Activated naive CD4-positive, alpha-beta T cell treated with anti-CD3 and anti-CD28 coated beads for 36 hours (primary cell): ENCODE measurements at regions of chr7 and their contacts with region 1.

Region 1: DNA sequence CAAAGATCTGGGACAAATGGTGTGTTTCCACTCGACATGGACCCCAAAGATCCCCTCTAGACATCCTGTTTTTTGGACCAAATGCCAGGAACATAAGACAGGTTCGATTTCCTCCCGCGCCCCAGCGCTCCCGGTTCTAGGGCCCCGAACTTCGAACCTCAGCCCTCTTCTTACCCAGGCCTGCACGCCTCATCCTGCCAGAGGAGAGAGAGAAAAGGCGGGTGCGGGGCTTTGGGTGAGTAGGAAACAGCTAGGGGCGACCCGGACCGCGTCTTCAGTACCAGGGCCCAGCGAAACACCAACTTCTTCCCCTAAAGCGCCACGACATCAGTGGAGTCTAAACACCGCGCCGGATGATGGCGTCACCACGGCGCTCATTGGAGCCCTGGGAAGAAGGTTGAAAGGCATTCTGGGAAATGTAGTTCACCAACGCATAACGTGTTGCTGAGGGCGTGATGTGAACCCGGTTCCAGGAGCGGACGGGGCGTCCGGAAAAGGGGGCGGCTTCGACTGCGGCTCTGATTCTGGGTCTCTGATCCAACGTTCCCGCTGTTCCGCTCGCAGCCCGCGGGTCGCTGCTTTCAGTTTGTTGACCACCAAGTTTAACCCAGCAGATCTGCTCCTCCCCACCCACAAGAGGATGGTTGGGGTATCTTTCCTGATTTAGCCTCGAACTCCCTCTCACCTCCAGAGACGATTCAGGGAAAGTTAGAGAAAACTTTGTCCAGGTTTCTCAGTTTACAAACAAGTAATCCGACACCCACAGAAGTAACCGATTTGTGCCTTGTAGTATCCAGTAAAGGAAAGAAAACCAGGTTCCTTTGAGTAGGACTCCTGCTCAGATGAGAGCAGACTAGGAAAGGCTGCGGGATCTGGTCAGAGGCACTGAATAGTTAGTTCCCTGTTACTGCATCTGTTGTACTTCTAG is at the start of gene BET1:
- DNase-seq: peak; percentile 94
- H3K4me3 Mint-ChIP-seq: peak within 1 kb of the TSS; percentile 99
- H3K27ac Mint-ChIP-seq: peak within 1 kb of the TSS; percentile 94
- H3K4me1 Mint-ChIP-seq: peaks cover 34% of the 10 kb centered on the region
- H3K27me3 Mint-ChIP-seq: peaks cover 6% of the 10 kb centered on the region
- total RNA-seq, gene BET1: 21.5 to 25.9 TPM

Region 2: DNA sequence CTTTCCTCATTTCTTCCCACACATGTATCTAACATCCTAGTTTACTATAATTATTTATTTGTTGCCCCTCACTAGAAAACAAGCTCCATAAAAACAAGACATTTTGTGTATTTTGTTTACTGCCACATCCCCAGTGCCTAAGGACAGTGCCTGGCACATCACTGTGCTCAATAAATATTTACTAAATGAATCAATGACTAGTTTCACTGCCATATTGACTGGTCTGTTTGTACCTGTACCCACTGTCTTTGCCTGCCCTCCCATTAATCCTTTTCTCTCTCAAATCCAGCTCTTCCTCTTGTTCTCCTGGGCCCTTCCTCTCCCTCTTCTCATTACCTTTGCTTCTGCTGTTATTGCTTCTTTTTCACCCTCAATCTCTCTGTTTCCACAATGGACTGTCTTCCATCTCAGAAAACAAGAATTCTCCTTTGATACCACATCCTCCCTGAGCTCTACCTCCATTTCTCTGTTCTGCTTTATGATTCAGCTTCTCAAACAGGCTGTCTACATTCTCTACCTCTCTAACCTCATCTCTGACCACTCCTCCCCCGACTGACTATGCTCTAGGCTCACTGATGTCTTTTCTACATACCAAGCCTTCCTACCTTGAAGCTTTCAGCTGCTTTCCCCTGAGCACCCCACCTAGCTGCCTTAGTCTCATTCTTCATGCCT is 1405.8 kb before region 1 on chr7:
- CTCF ChIA-PET with region 1: no interaction called
- intact Hi-C with region 1: loop called (anchors 10 kb)
- DNase-seq: no peak
- H3K4me3 Mint-ChIP-seq: no peak overlapping the region
- H3K27ac Mint-ChIP-seq: no peak overlapping the region
- H3K4me1 Mint-ChIP-seq: no peaks in the 10 kb centered on the region
- H3K27me3 Mint-ChIP-seq: no peaks in the 10 kb centered on the region

Region 3: DNA sequence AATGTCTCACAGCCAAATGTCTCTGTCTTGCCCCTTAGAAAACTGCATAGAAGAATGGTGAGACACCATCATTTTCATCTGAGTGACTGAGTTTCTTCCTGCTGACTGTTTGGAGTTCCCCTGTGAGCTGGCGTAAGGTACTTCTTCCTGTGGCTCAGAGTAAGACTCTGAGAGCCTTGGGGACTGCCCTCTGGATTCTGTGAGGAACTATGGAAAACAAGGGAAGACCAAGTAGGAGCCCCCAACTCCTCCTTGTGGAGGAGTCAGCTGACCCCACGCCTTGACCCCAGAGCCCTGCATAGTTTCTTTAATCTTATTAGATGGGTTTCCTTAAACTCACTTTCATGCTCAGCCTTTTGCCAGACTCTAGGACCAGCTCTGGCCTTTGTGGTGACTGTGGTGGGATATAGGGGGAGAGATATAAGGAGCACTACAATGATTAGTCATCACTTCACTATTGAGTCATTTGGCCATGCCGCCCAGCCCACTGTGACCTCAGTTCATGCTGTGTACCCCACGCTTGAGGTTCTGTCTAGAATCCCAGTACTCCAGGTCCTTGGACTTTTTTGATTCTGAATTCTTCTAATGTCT is 1362.3 kb before region 1 on chr7:
- CTCF ChIA-PET with region 1: no interaction called
- intact Hi-C with region 1: loop called (anchors 5 kb)
- DNase-seq: peak; percentile 71
- H3K4me3 Mint-ChIP-seq: peak overlapping the region; percentile 33
- H3K27ac Mint-ChIP-seq: peak overlapping the region; percentile 97
- H3K4me1 Mint-ChIP-seq: peaks cover 89% of the 10 kb centered on the region
- H3K27me3 Mint-ChIP-seq: no peaks in the 10 kb centered on the region

Region 4: GRCh38 chr7:94022550-94022949 is 18.3 kb after region 1 on chr7:
- CTCF ChIA-PET with region 1: no interaction called
- intact Hi-C with region 1: loop called (anchors 1 kb)
- DNase-seq: peak; percentile 50
- H3K4me3 Mint-ChIP-seq: no peak overlapping the region
- H3K27ac Mint-ChIP-seq: no peak overlapping the region
- H3K4me1 Mint-ChIP-seq: peaks cover 6% of the 10 kb centered on the region
- H3K27me3 Mint-ChIP-seq: peaks cover 23% of the 10 kb centered on the region